Cardiac septum (tissue), 1 donor: ENCODE measurements at regions of chr6 and their contacts with region 1.

Region 1: DNA sequence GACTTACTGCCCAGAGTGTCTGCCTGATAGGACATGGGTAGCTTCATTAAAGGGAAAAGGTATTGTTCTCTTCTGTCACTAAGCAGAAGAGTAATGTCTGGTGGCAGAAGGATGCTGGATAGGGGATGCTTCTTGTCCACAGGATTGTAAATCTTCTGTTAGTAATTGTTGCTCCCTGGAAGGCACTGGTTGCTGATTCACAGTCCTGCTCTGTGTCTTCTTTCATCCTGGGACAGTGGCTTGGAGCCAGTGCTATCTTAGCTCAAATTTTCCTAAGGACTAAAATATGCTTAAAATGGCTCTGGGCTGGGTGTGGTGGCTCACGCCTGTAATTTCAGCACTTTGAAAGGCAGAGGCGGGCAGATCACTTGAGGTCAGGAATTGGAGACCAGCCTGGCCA is 48.0 kb downstream of the SYTL3 start:
- DNase-seq: peak; percentile 14

Region 2: GRCh38 chr6:158213925-158214674 is 483.7 kb before region 1 on chr6:
- intact Hi-C with region 1: loop called (anchors 10 kb)
- DNase-seq: no peak

Region 3: GRCh38 chr6:158629367-158630221 is 68.2 kb before region 1 on chr6:
- intact Hi-C with region 1: loop called (anchors 5 kb)
- DNase-seq: no peak